B cell (primary cell): ENCODE measurements at regions of chr6 and their contacts with region 1.

Region 1: DNA sequence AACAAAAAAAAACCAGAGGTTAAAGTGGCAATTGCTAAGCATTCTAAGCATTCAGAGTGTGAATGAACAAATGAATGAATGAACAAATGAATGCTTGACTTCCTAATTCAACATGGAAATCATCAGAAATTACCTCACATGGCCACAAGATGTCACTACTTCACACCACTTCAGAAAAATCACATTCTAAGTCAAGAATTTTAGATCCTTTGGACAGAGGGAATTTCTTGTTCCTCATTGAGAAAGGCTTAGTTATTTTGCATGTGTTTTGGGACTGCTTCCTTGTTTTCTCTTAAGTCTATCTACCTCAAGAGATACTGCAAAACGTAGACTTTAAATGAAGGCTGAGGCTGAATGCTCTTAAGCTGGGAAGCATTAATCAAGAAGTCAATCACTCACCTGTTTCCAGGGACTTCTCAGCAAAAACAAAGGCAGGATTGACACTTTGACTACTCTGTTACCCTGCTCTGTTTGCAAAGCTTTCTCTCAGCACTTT is 120.2 kb downstream of the MBOAT1 start:
- DNase-seq: peak; percentile 37
- ATAC-seq: no peak
- H3K4me3 ChIP-seq: no peak overlapping the region
- H3K4me3 Mint-ChIP-seq: no peak overlapping the region
- H3K27ac ChIP-seq: no peak overlapping the region
- H3K27ac Mint-ChIP-seq: no peak overlapping the region
- H3K4me1 ChIP-seq: no peaks in the 10 kb centered on the region
- H3K4me1 Mint-ChIP-seq: no peaks in the 10 kb centered on the region
- H3K27me3 ChIP-seq: no peaks in the 10 kb centered on the region
- H3K27me3 Mint-ChIP-seq: no peaks in the 10 kb centered on the region
- CTCF ChIP-seq: peak; percentile 83

Region 2: DNA sequence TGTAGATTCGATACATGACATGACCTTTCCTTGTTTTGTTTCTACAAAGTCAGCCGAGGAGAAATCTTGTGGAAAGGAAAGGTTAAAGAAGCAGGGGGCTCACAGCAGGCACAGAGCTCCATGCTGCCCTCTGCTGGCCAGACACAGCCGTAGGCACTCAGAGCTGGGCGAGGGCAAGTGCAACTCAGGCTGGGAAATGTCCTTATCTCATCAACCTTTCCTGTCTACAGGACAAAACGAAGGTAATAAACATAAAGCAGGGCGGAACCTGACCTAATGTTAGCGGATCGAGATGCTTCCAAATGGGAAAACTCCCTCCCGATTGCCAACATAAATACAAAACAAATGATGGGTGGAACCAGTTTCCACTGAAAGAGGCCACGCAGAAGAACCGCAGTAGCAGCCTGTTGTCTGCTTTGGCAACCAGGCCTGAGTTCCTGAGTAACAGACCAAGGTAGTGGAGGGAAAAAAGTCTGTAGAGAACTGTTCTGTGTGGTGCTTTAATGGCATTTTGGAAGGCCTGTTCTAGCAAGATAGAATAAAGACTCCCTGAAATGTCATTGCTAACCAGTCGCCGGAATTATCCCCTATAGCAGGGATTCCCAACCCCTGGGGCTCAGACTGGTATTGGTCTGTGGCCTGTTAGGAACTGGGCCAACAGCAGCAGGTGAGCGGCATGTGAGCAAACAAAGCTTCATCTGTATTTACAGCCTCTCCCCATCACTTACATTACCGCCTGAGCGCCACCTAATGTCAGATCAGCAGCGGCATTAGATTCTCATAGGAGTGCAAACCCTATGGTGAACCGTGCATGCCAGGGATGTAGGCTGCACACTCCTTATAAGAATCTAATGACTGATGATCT is 34.9 kb after region 1 on chr6:
- CTCF ChIA-PET with region 1: interaction called, 19 read pairs
- POLR2A ChIA-PET with region 1: no interaction called
- intact Hi-C with region 1: no loop called
- DNase-seq: peak; percentile 55
- ATAC-seq: peak; percentile 47
- H3K4me3 ChIP-seq: no peak overlapping the region
- H3K4me3 Mint-ChIP-seq: no peak overlapping the region
- H3K27ac ChIP-seq: no peak overlapping the region
- H3K27ac Mint-ChIP-seq: no peak overlapping the region
- H3K4me1 ChIP-seq: no peaks in the 10 kb centered on the region
- H3K4me1 Mint-ChIP-seq: peaks cover 3% of the 10 kb centered on the region
- H3K27me3 ChIP-seq: no peaks in the 10 kb centered on the region
- H3K27me3 Mint-ChIP-seq: no peaks in the 10 kb centered on the region
- CTCF ChIP-seq: peak; percentile 96